Activated CD4-positive, alpha-beta memory T cell treated with anti-CD3 and anti-CD28 coated beads, Interleukin-2, amount 10 ng/mL, durations not matched to agents 7 days and 5 days (primary cell): ENCODE measurements at regions of chr3 and their contacts with region 1.

Region 1: GRCh38 chr3:53709860-53710674 is 136.2 kb downstream of the CHDH start:
- DNase-seq: peak; percentile 75
- H3K4me3 Mint-ChIP-seq: no peak overlapping the region
- H3K27ac Mint-ChIP-seq: no peak overlapping the region
- H3K4me1 Mint-ChIP-seq: peaks cover 58% of the 10 kb centered on the region
- H3K27me3 Mint-ChIP-seq: no peaks in the 10 kb centered on the region

Region 2: DNA sequence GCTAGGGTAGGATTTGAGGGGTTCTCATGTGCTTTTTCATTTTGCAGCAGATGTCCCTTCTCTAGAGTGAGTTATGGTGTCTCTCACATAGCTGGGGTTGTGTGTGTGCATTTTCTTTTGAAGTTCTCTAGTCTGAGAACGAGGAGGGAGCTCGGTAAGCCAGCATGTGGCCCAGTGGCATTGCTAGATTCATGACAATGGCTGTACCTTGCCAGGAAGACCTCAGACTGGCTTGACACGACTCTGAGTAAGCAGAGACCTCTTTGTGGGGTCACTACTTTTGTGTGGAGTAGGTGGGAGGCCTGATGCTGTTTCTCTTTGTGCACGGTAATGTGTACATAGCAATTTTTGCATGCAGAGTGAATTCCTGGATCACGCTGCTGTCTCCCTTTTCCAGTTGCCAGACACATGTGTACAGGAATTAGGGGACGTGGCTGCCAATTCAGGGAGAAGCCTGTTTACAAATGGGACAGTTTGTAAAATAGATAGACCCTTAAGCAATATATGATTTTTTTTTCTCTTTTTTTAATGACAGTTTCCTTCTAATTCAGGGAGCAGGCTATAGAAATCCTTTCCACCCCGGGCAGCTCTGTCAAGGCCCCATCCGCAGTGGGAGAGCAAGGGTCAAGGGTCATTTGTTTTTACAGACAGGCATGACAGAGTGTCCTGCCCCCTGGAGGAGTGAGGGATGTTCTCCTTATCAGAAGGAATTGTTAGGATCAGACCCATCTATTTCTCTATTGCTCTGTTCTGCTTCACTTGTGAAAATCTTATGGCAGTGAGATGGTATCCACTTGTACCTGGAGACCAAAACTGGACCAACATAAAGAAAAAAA is 211.0 kb before region 1 on chr3:
- CTCF ChIA-PET with region 1: no interaction called
- POLR2A ChIA-PET with region 1: no interaction called
- DNase-seq: no peak
- H3K4me3 Mint-ChIP-seq: no peak overlapping the region
- H3K27ac Mint-ChIP-seq: no peak overlapping the region
- H3K4me1 Mint-ChIP-seq: peaks cover 6% of the 10 kb centered on the region
- H3K27me3 Mint-ChIP-seq: peaks cover 53% of the 10 kb centered on the region

Region 3: GRCh38 chr3:53555068-53555588 is 154.9 kb before region 1 on chr3:
- CTCF ChIA-PET with region 1: no interaction called
- POLR2A ChIA-PET with region 1: no interaction called
- DNase-seq: no peak
- H3K4me3 Mint-ChIP-seq: no peak overlapping the region
- H3K27ac Mint-ChIP-seq: no peak overlapping the region
- H3K4me1 Mint-ChIP-seq: peaks cover 6% of the 10 kb centered on the region
- H3K27me3 Mint-ChIP-seq: peaks cover 18% of the 10 kb centered on the region

Region 4: DNA sequence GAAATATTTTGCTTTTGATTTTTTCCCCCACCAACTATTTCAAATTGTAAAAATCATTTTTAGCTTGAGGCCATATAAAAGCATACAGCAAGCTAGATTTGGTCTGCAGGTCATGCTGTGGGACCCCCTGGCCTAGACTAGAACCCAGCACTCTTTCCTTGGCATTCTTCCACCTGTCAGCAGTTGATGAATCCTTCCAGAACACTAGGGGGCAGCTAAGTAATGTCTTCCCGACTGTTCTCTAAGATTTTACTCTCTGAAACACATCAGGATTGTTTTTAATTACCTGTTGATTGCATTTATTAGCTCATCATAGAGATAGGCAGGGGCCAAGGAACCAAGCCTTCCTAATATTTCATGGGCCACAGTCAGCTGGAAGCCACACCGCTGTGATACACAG is 41.2 kb before region 1 on chr3:
- CTCF ChIA-PET with region 1: interaction called, 54 read pairs
- POLR2A ChIA-PET with region 1: interaction called, 4 read pairs
- DNase-seq: no peak
- H3K4me3 Mint-ChIP-seq: no peak overlapping the region
- H3K27ac Mint-ChIP-seq: no peak overlapping the region
- H3K4me1 Mint-ChIP-seq: no peaks in the 10 kb centered on the region
- H3K27me3 Mint-ChIP-seq: peaks cover 31% of the 10 kb centered on the region

Region 5: DNA sequence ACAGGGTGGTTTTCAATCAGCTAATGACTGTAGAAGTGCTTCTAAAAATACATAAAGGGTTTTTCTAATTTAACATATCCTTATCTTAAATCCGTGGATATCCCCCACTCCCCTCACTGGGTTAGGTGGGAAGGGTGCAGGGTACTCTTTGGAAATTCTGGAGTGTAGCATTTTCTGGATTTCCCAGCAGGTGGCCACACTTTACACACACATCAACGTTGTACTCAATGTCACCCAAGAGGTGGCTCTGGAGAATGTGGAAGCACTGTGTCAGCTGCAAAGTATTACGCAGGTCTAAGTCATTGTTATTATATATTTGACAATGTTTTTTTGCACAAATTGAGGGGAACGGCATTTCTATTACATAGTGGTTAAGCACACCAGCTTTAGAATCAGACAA is 32.7 kb before region 1 on chr3:
- CTCF ChIA-PET with region 1: interaction called, 54 read pairs
- POLR2A ChIA-PET with region 1: interaction called, 4 read pairs
- DNase-seq: no peak
- H3K4me3 Mint-ChIP-seq: no peak overlapping the region
- H3K27ac Mint-ChIP-seq: no peak overlapping the region
- H3K4me1 Mint-ChIP-seq: peaks cover 1% of the 10 kb centered on the region
- H3K27me3 Mint-ChIP-seq: peaks cover 38% of the 10 kb centered on the region

Region 6: DNA sequence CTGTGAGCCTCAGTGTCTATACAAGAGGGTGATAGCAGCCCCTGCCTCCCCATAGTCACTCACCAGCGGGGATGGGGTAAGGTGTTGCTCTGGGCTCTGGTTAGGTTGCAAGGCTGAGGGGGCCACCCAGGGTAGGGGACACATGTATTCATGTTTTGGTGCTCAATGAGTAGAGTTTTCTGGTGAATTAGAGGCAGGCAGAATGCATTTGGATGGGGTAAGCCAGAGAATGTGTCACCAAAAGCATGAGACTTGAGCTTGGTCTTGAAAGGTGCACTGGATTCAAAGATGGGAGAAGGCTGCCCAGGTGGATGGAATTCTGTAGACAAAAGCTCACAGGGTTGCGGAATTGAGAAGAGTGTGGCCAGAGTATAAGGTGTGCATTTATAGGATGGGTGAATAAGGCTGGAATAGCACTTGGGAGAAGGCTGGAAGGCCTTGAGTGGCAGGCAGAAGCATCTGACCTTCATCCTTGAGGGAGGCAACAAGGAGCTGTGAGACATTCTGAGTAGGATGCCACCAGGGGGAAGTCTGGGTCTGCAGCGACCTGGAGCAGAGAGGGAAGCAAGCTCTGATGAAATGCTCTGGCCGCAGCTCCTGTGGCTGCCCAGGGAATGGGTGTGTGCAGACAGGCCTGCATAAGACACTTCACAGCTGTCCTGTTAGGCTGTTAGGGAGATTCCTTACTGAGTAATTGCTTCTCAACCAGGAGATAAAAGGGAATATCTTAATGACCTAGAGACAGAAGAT is 13.5 kb before region 1 on chr3:
- CTCF ChIA-PET with region 1: interaction called, 31 read pairs
- POLR2A ChIA-PET with region 1: interaction called, 3 read pairs
- DNase-seq: no peak
- H3K4me3 Mint-ChIP-seq: no peak overlapping the region
- H3K27ac Mint-ChIP-seq: no peak overlapping the region
- H3K4me1 Mint-ChIP-seq: peaks cover 54% of the 10 kb centered on the region
- H3K27me3 Mint-ChIP-seq: peaks cover 13% of the 10 kb centered on the region

Region 7: DNA sequence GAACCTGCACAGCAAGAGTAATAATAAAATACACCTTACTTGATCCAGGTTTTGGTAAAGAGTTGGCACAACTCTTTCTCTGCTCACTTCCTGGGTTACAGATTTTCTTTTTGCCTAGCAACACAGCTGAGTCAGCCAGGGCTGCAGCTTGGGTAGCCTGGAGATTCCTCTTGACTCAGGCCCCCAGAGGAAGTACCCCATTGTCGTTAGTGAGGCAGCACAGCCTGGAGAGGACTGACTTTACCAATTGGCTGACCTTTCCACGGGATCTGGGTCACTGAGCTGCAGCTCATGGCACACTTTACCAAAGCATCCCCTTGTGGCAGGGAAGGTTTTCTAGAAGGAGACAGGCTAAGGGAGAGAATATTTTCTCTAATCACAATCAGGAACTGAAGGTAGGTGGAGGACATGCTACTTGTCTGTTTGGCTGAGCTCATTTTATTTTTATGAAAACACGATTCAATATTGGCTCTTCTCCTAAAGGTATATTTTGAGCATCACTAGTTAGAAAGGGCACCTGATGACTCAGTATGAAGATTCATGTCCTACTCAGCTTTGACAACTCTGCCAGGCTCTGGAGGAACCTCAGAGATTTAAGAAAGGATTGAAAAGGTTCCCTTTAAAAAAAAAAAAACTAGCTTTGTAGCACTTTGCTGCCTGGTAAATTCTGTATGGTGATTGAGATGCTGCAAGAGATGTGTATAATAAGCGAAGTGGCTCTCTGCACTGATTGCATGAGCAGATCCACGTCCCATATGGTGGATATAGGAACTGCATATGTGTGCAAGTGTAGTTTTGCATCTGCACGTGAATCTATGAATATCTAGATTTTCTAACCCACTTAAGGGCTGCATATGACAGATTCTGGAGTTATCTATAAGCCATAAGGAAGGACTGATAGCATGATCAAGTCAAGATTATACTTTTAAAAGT is 11.4 kb after region 1 on chr3:
- CTCF ChIA-PET with region 1: interaction called, 31 read pairs
- POLR2A ChIA-PET with region 1: interaction called, 10 read pairs
- DNase-seq: no peak
- H3K4me3 Mint-ChIP-seq: no peak overlapping the region
- H3K27ac Mint-ChIP-seq: peak overlapping the region; percentile 28
- H3K4me1 Mint-ChIP-seq: peaks cover 48% of the 10 kb centered on the region
- H3K27me3 Mint-ChIP-seq: peaks cover 23% of the 10 kb centered on the region

Region 8: GRCh38 chr3:53744351-53744750 is 34.3 kb after region 1 on chr3:
- CTCF ChIA-PET with region 1: interaction called, 10 read pairs
- POLR2A ChIA-PET with region 1: no interaction called
- DNase-seq: no peak
- H3K4me3 Mint-ChIP-seq: no peak overlapping the region
- H3K27ac Mint-ChIP-seq: no peak overlapping the region
- H3K4me1 Mint-ChIP-seq: peaks cover 27% of the 10 kb centered on the region
- H3K27me3 Mint-ChIP-seq: peaks cover 43% of the 10 kb centered on the region

Region 9: GRCh38 chr3:54176106-54176505 is 466.0 kb after region 1 on chr3:
- CTCF ChIA-PET with region 1: no interaction called
- POLR2A ChIA-PET with region 1: no interaction called
- DNase-seq: no peak
- H3K4me3 Mint-ChIP-seq: no peak overlapping the region
- H3K27ac Mint-ChIP-seq: no peak overlapping the region
- H3K4me1 Mint-ChIP-seq: no peaks in the 10 kb centered on the region
- H3K27me3 Mint-ChIP-seq: no peaks in the 10 kb centered on the region